Activated B cell treated with CpG ODN at 0.5 μM for 24 hours (primary cell): ENCODE measurements at regions of chr20 and their contacts with region 1.

Region 1: DNA sequence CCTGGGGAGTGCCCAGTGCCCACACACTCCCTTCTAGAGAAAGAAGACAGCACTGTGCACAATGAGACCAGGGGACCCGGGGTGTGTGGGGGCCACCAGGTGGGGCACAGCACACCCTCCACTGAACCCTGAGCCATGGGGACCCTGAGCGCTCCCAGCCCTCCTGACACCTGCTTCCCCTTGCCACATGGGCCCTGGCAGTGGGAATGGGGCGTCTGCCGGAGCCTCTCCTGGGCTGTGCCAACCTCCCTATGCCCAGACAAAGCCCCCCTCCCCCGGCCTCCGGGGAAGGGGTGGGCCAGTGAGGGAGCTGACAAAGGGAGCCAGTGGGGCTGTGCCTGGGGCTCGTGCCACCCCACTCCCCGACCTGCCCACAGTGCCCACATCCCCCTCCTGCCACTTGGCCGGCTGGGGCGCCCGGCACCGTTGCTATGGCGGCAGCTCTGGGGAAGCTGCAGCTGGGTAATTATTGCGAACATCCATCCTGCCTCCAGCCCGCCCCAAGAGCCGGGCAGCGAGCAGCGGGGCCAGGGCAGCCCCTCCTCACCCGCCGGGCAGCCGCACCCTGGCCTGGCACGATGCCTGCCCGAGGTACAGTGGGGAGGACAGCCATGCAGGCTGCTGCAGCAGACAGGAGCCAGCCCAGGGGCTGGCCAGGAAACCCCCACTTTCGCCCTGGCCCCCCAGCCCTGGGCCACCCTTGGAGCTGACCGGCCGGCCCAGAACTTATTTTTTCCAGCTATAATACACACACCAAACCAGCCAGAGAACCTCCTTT is 41.9 kb upstream of the NOL4L start:
- DNase-seq: peak; percentile 27
- ATAC-seq: peak; percentile 49
- H3K4me3 Mint-ChIP-seq: peak overlapping the region; percentile 57
- H3K27ac Mint-ChIP-seq: no peak overlapping the region
- H3K4me1 Mint-ChIP-seq: peaks cover 13% of the 10 kb centered on the region
- H3K27me3 Mint-ChIP-seq: peaks cover 2% of the 10 kb centered on the region
- CTCF ChIP-seq: no peak

Region 2: DNA sequence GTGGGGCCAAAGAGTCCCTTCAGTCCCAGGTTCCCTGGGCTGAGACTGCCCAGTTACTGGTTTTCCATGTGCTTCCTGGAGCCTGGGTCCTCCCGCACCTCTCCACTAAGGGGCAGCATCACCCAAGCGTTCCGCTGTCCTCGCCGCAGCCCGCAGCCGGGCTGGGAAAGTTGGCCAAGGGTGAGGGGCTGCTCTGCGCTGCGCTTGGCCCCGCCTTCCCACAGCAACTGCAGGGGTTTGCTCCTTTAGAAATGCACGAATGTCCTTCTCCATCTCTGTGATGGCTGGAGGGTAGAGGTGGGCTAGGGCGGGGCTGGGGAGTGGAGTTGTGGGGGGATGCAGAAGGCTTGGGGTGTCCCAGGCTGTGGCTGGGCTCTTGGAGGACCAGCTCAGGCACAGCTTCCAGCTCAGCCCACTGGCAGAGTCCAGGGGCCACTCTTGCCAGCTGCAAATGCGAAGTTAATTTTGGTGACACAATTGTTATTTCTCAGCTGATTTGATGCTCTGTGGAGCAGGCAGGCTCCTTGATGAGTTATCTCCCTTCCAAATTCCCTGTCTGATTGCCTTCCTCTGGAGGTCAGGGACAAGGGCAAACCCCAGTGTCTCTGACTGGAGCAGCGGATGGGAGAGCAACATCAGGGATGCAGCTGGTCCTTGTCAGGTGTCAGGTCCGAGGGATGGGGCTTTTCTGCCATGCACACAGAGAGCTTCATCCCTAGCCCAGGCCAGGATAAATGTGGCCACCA is 105.1 kb before region 1 on chr20:
- CTCF ChIA-PET with region 1: interaction called, 11 read pairs
- POLR2A ChIA-PET with region 1: no interaction called
- intact Hi-C with region 1: no loop called
- DNase-seq: peak; percentile 53
- ATAC-seq: peak; percentile 73
- H3K4me3 Mint-ChIP-seq: no peak overlapping the region
- H3K27ac Mint-ChIP-seq: no peak overlapping the region
- H3K4me1 Mint-ChIP-seq: peaks cover 40% of the 10 kb centered on the region
- H3K27me3 Mint-ChIP-seq: no peaks in the 10 kb centered on the region
- CTCF ChIP-seq: no peak

Region 3: DNA sequence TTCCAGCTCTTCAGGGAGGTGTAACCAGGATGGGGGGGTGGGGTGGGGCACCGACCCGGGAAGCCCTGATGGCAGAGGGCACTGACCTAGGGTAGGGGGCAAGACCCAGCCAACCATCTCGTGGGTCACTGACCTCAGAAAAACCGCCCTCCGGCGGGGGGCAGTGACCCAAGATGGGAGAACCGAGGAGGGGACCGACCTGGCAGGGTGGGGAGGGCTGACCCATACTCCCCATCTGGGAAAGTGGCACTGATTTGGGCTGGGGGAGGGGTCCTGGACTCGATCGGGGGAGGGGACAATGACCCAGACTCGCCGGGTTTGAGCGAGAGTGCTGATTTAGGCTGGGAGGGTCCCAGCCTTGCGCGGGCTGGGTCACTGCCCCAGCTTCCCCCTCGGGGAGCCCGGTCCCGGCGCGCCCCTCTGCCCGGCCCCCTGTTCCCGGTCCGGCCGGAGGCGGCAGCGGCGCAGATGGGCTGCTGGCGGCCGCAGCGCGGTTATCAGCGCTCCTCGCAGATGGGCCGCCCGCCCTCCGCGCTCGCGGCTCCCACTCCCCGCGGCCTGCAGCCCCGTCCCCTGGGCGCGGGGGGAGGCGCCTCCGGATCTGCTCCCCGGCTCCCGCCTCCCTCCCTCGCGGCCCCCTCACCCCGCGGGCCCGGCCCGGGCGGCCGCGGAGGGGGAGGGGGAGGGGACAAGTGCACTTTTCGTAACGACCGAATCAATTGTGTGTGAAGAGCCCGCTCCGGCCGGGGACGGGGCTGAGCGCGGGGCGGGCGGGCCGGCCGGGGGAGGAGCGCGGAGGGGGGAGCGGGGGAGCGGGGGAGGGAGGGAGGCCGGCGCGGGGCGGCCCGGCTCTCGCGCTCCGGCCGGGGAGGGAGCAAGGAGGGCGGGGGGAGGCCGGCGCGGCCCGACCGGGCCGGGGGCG is 44.1 kb before region 1 on chr20:
- CTCF ChIA-PET with region 1: no interaction called
- POLR2A ChIA-PET with region 1: no interaction called
- intact Hi-C with region 1: loop called (anchors 2 kb)
- DNase-seq: peak; percentile 34
- ATAC-seq: peak; percentile 18
- H3K4me3 Mint-ChIP-seq: no peak overlapping the region
- H3K27ac Mint-ChIP-seq: no peak overlapping the region
- H3K4me1 Mint-ChIP-seq: peaks cover 32% of the 10 kb centered on the region
- H3K27me3 Mint-ChIP-seq: peaks cover 5% of the 10 kb centered on the region
- CTCF ChIP-seq: no peak